ENCODE measurements at regions of chr7 and their contacts with region 1.

Region 1: GRCh38 chr7:30276203-30276900 is 8.0 kb upstream of the ZNRF2 start:
- DNase-seq: no peak
- H3K4me3 ChIP-seq: no peak overlapping the region
- H3K27me3 ChIP-seq: peaks cover 3% of the 10 kb centered on the region; the same call in 1 of the 2 replicates
- CTCF ChIP-seq: peak; percentile 81

Region 2: GRCh38 chr7:30412810-30413504 is 136.6 kb after region 1 on chr7:
- CTCF ChIA-PET with region 1: interaction called, 79 read pairs
- POLR2A ChIA-PET with region 1: no interaction called
- DNase-seq: peak; percentile 42
- H3K4me3 ChIP-seq: no peak overlapping the region
- H3K27me3 ChIP-seq: no peaks in the 10 kb centered on the region
- CTCF ChIP-seq: peak; percentile 54

Measured in BJ (cell line).